Activated CD4-positive, alpha-beta T cell treated with anti-CD3 and anti-CD28 coated beads, Interleukin-2, amount 10 ng/mL, durations not matched to agents 7 days and 5 days (primary cell): ENCODE measurements at regions of chr15 and their contacts with region 1.

Region 1: GRCh38 chr15:74382004-74382816 is 14.8 kb upstream of the CYP11A1 start:
- DNase-seq: peak; percentile 79
- H3K4me3 Mint-ChIP-seq: no peak overlapping the region
- H3K27ac Mint-ChIP-seq: peak overlapping the region; percentile 60
- H3K4me1 Mint-ChIP-seq: peaks cover 57% of the 10 kb centered on the region
- H3K27me3 Mint-ChIP-seq: no peaks in the 10 kb centered on the region

Region 2: GRCh38 chr15:74291101-74292071 is 90.8 kb before region 1 on chr15:
- CTCF ChIA-PET with region 1: no interaction called
- POLR2A ChIA-PET with region 1: no interaction called
- DNase-seq: peak; percentile 87
- H3K4me3 Mint-ChIP-seq: no peak overlapping the region
- H3K27ac Mint-ChIP-seq: no peak overlapping the region
- H3K4me1 Mint-ChIP-seq: peaks cover 4% of the 10 kb centered on the region
- H3K27me3 Mint-ChIP-seq: no peaks in the 10 kb centered on the region

Region 3: DNA sequence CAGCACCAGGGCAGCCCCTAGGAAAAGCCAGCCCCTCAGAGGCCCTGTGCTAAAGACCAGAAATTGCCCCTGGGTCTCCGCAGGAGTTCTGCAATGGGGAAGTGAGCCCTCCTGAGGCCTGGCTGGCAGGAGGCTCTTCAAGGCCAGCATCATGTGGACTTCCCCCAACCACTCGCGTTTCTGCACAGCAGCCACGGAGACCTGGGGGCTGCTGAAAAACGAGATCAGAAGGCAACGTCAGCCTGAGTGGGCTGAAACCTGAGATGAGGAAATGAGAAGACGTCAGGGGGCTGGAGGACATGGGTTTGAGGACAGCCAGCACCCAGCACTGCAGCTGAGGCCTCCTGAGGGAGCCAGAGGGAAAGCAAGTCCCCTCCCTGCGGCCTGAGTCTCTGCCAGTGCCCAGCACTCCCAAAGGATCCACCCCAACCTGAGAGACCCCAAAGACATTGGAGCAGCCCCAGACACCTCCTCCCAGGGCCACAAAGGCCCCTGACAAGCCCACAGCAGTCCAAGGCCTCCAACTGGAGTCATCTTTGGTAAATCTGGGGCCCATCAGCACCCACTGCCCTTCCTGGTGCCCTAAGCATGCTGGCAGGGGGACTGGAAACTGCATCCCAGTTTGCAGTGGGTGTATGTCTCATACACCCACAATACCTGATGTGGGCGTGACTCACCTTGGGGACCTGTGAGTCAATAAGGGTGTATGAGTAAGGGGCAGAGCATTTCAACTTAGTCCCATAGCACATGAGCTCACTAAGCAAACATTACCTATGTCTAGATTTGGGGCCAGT is 14.4 kb after region 1 on chr15:
- CTCF ChIA-PET with region 1: interaction called, 49 read pairs
- POLR2A ChIA-PET with region 1: interaction called, 4 read pairs
- DNase-seq: no peak
- H3K4me3 Mint-ChIP-seq: no peak overlapping the region
- H3K27ac Mint-ChIP-seq: no peak overlapping the region
- H3K4me1 Mint-ChIP-seq: peaks cover 68% of the 10 kb centered on the region
- H3K27me3 Mint-ChIP-seq: no peaks in the 10 kb centered on the region

Region 4: DNA sequence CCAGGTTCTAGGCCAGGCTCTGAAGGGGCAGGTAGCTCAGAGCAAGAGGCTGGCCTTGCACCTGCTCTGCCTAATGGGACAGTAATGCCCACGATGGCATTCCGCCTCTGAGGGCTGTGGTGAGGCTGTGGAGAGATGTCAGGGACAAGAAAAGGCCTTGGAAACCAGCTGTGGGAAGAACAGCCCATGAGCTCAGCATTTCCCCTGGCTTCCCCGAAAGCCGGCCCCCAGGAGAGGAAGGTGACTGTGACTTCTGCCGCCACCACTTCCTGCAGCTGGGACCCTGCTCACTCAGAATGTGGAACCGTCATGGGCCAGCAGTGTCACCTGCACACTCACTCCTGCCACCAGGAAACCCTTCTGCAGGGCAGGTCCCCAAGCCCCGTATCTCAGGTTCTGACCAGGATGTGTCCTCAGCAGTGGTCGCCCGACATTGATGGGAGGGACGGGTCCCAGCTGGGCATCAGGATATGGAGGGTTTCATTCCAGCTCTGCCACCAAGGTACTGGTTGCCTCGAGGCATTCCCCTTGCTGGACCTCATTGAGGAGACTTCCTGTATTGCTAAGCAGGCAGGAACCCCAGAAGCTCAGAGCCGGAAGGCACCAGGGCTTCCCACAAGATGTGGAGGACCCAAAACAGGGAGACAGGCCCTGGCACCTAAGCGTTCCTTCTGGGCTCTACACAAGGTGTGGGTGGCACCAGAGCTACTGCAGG is 20.8 kb after region 1 on chr15:
- CTCF ChIA-PET with region 1: interaction called, 49 read pairs
- POLR2A ChIA-PET with region 1: interaction called, 6 read pairs
- DNase-seq: peak; percentile 72
- H3K4me3 Mint-ChIP-seq: peak overlapping the region; percentile 37
- H3K27ac Mint-ChIP-seq: peak overlapping the region; percentile 90
- H3K4me1 Mint-ChIP-seq: peaks cover 63% of the 10 kb centered on the region
- H3K27me3 Mint-ChIP-seq: no peaks in the 10 kb centered on the region

Region 5: DNA sequence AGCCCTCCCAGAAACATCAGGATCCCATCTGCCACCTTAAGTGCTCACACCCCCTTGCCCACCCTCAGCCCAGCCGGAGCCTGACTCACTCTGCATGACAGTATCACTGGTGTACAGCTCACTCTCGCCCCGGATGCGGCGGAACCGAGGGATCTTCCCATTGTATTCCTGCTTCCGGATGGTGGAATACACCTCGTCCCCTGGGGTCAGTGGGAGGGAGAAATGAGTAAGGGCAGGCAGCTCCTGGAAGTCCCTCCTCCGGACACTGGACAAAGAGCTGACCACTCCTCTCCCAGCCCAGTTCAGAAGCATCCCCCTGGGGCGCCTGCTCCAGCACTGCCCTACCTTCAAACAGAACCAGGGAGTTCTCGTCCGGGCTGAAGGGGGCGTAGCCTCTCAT is 35.0 kb after region 1 on chr15:
- CTCF ChIA-PET with region 1: interaction called, 10 read pairs
- POLR2A ChIA-PET with region 1: no interaction called
- DNase-seq: no peak
- H3K4me3 Mint-ChIP-seq: no peak overlapping the region
- H3K27ac Mint-ChIP-seq: no peak overlapping the region
- H3K4me1 Mint-ChIP-seq: peaks cover 36% of the 10 kb centered on the region
- H3K27me3 Mint-ChIP-seq: no peaks in the 10 kb centered on the region

Region 6: GRCh38 chr15:74422650-74423430 is 40.6 kb after region 1 on chr15:
- CTCF ChIA-PET with region 1: interaction called, 10 read pairs
- POLR2A ChIA-PET with region 1: interaction called, 3 read pairs
- DNase-seq: no peak
- H3K4me3 Mint-ChIP-seq: no peak overlapping the region
- H3K27ac Mint-ChIP-seq: peak overlapping the region; percentile 46
- H3K4me1 Mint-ChIP-seq: peaks cover 18% of the 10 kb centered on the region
- H3K27me3 Mint-ChIP-seq: no peaks in the 10 kb centered on the region

Region 7: GRCh38 chr15:74433592-74434262 is 51.5 kb after region 1 on chr15 and contains the start of gene SEMA7A:
- CTCF ChIA-PET with region 1: interaction called, 120 read pairs
- POLR2A ChIA-PET with region 1: interaction called, 3 read pairs
- DNase-seq: peak; percentile 79
- H3K4me3 Mint-ChIP-seq: peak within 1 kb of the TSS; percentile 73
- H3K27ac Mint-ChIP-seq: peak within 1 kb of the TSS; percentile 76
- H3K4me1 Mint-ChIP-seq: peaks cover 46% of the 10 kb centered on the region
- H3K27me3 Mint-ChIP-seq: peaks cover 4% of the 10 kb centered on the region
- total RNA-seq, gene SEMA7A: 2.7 to 3.5 TPM

Region 8: DNA sequence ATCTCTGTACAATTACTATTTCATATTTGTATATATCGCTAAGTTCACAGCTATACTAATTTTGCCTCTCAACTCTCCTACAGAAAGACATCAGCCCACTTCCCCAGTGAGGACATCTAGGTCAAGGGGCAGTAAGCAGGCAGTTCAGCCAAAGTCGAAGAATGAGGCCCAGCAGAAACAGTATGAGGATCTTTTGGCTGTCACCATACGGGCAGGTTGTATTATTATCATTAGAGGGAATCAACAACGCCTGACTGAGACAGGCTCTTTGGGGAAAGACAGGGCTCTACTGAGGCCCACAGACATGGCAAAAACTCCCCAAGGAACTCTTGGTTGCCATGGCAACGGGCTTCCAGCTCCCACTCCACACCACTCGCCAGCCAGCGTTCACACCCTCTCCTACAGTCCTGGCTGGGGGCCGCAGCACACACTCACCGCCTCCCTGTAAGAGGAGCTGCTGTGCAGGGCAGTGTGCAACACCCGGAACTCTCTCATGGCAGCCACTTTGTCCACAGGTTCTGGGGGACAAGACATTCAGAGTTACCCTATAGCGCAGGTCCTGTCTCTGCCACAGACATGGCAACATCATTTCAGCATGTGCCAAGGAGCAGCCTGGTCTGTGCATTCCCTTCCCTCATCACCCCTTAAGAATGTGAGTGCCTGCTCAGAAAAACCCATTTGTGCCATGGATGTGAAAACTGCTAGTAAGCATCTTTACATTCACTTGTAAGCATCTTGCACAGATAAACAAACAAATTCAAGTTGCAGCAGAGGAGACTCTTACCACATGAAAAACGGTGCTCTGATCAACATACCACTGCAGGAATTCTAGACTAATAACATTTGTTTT is 69.9 kb after region 1 on chr15:
- CTCF ChIA-PET with region 1: interaction called, 27 read pairs
- POLR2A ChIA-PET with region 1: no interaction called
- DNase-seq: no peak
- H3K4me3 Mint-ChIP-seq: no peak overlapping the region
- H3K27ac Mint-ChIP-seq: no peak overlapping the region
- H3K4me1 Mint-ChIP-seq: peaks cover 25% of the 10 kb centered on the region
- H3K27me3 Mint-ChIP-seq: no peaks in the 10 kb centered on the region